Activated CD4-positive, alpha-beta memory T cell treated with anti-CD3 and anti-CD28 coated beads for 36 hours (primary cell): ENCODE measurements at regions of chr12 and their contacts with region 1.

Region 1: DNA sequence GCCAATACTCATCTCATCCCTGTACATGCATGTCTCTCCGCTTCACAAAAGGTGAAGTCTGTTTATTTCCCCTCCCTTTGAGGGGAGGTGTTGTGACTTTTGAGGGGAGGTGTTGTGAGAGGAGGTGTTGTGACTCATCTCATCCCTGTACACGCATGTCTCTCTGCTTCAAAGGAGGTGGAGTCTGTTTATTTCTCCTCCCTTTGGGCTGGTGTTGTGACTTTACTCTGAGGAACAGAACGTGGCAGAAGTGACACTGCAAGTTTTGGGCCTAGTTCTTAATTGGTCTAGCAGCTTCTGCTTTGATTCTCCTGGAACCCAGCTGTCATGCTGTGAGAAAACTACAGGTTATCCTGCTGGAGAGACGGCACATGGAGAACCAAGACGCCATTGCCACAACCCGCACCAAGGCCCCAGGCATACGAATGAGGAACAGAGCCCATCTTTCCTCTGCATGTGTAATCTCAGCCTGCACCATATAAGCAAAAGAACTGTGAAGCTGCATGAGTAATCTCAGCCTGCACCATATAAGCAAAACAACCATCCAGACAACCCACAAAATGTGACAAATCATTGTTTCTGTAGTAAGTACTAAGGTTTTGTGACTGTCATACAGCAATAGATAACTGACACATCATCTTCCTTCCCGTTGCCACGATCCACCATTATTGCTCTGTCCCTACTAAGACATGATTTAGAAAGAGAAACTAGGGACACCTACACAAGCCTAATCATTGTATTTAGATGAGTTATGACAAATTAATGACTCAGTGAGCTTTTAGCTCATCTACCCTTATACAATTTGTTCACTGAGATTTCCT is 30.0 kb downstream of the GALNT4 start:
- DNase-seq: peak; percentile 71
- H3K4me3 Mint-ChIP-seq: peak overlapping the region; percentile 36
- H3K27ac Mint-ChIP-seq: peak overlapping the region; percentile 99
- H3K4me1 Mint-ChIP-seq: peaks cover 30% of the 10 kb centered on the region
- H3K27me3 Mint-ChIP-seq: no peaks in the 10 kb centered on the region

Region 2: GRCh38 chr12:88241862-88242570 is 1252.6 kb before region 1 on chr12:
- CTCF ChIA-PET with region 1: no interaction called
- POLR2A ChIA-PET with region 1: no interaction called
- intact Hi-C with region 1: loop called (anchors 10 kb)
- DNase-seq: peak; percentile 54
- H3K4me3 Mint-ChIP-seq: no peak overlapping the region
- H3K27ac Mint-ChIP-seq: peak overlapping the region; percentile 83
- H3K4me1 Mint-ChIP-seq: peaks cover 35% of the 10 kb centered on the region
- H3K27me3 Mint-ChIP-seq: peaks cover 13% of the 10 kb centered on the region

Region 3: DNA sequence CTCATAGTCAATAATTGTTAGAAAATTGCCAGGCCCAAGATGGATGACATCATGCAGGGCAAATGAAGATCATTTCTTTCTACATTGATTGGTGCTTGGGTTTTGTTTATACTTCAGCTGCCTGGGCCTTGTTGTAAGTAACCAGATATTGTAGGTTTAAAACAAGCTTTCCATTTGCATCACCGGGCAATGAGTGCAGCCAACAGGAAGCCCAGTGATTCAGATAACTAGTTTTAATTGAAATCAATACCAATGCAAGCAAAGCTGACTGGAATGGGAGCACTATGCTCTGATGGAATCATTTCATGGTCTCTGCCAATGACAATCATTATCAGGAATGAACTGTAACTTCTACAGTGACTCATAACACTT is 421.6 kb before region 1 on chr12:
- CTCF ChIA-PET with region 1: no interaction called
- POLR2A ChIA-PET with region 1: no interaction called
- intact Hi-C with region 1: loop called (anchors 1 kb)
- DNase-seq: peak; percentile 48
- H3K4me3 Mint-ChIP-seq: no peak overlapping the region
- H3K27ac Mint-ChIP-seq: peak overlapping the region; percentile 86
- H3K4me1 Mint-ChIP-seq: peaks cover 41% of the 10 kb centered on the region
- H3K27me3 Mint-ChIP-seq: no peaks in the 10 kb centered on the region

Region 4: GRCh38 chr12:89524541-89525285 is 30.1 kb after region 1 on chr12 and contains the start of gene GALNT4:
- CTCF ChIA-PET with region 1: interaction called, 8 read pairs
- POLR2A ChIA-PET with region 1: interaction called, 23 read pairs
- intact Hi-C with region 1: loop called (anchors 1 kb)
- DNase-seq: peak; percentile 86
- H3K4me3 Mint-ChIP-seq: peak within 1 kb of the TSS; percentile 99
- H3K27ac Mint-ChIP-seq: peak within 1 kb of the TSS; percentile 98
- H3K4me1 Mint-ChIP-seq: peaks cover 45% of the 10 kb centered on the region
- H3K27me3 Mint-ChIP-seq: no peaks in the 10 kb centered on the region
- total RNA-seq, gene GALNT4: 5.8 to 6.0 TPM

Region 5: DNA sequence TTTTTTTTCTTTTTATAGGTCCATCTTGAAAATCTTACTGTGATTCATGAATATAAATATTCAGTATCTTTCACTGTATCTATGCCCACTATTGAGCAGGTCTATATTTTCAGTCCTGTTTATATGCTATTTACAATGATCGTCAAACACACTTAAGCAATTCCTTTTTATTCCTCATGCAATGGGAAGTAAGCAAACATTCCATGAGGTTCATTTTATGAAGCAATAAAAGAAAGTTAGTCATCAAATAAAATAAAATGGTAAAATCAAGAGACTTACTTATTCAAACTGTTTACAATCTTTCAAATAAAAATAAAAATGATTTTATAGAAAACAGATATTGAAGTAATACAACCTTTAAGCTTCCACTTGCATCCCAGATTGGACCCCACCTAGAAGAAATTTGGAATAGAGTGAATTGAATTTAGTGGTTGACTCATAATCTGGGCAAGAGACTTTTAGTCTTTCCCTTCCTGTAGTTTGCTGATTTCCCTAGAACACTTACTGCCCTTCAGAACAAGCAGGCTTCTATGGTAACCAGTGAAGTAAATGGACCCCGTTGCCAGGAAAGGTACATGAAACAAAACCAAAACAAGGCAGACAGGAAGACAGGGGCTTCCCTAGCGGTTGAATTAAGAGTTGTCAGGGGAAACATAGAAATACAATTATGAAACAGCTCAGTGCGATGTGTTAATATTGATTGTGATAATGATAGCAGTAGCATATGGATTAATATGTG is 455.0 kb after region 1 on chr12:
- CTCF ChIA-PET with region 1: no interaction called
- POLR2A ChIA-PET with region 1: no interaction called
- intact Hi-C with region 1: loop called (anchors 1 kb)
- DNase-seq: peak; percentile 60
- H3K4me3 Mint-ChIP-seq: peak overlapping the region; percentile 4
- H3K27ac Mint-ChIP-seq: peak overlapping the region; percentile 26
- H3K4me1 Mint-ChIP-seq: peaks cover 51% of the 10 kb centered on the region
- H3K27me3 Mint-ChIP-seq: no peaks in the 10 kb centered on the region